WTC11 (cell line): ENCODE measurements at regions of chr17 and their contacts with region 1.

Region 1: DNA sequence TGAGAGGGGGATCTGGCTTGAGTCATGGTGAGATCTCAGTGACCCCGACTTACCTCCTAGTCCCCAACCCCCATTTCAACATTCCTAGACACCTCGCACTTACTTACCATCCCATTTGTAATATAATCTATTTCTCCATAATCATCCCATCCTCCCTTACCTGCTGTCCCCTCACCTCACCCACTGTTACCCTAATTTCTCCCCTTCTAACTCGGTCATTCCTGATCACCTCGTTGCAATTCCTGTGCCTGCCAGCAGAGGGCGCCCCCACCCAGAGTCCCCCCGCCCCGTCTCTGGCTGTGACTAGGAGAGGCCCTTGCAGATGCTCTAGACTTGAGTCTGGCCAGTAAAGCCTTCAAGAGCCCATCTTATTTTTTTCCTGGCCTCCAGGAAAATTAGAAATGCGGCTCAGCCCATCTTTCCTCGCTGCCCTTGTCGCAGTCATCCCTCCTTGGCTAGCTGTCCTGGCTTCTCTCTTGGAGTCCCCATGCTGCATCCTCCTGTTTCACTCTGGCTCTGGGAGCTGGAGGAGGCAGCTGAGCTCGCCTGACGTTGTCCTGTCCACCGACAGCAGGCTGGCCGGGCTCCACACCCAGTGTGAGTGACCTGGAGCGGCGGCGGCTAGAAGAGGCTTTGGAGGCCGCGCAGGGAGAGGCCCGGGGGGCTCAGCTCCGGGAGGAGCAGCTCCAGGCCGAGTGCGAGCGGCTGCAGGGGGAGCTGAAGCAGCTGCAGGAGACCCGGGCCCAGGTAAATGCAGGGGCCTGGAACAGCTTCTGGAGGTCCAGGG is 5.0 kb downstream of the TBKBP1 start:
- DNase-seq: peak; percentile 88
- ATAC-seq: peak; percentile 23
- H3K4me3 Mint-ChIP-seq: no peak overlapping the region
- H3K27ac Mint-ChIP-seq: no peak overlapping the region
- H3K4me1 Mint-ChIP-seq: peaks cover 16% of the 10 kb centered on the region
- H3K27me3 Mint-ChIP-seq: no peaks in the 10 kb centered on the region
- CTCF ChIP-seq: peak; percentile 100

Region 2: DNA sequence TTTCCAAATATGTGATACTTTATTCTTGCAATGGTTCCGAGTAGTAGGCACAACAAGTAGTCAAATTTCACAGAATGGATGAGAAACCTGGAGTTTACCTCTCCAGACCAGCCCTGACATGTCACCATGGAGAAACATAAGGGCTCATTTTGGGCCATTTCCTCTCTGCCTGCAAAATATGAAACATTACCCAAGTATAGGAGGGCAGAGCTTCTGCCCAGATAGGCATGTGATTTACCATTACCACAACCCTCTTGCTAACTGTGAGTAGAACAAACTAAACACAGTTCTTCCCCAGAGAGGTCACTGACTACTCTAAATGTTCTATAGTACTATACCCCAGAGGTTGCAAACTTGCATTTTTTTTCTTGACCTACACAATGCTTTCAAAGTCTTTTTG is 64.9 kb before region 1 on chr17:
- CTCF ChIA-PET with region 1: no interaction called
- POLR2A ChIA-PET with region 1: no interaction called
- DNase-seq: no peak
- ATAC-seq: no peak
- H3K4me3 Mint-ChIP-seq: no peak overlapping the region
- H3K27ac Mint-ChIP-seq: no peak overlapping the region
- H3K4me1 Mint-ChIP-seq: no peaks in the 10 kb centered on the region
- H3K27me3 Mint-ChIP-seq: no peaks in the 10 kb centered on the region
- CTCF ChIP-seq: no peak

Region 3: GRCh38 chr17:47649153-47649971 is 49.6 kb before region 1 on chr17 and contains the start of gene KPNB1:
- CTCF ChIA-PET with region 1: interaction called, 10 read pairs
- POLR2A ChIA-PET with region 1: interaction called, 15 read pairs
- DNase-seq: peak; percentile 99
- ATAC-seq: peak; percentile 91
- H3K4me3 Mint-ChIP-seq: peak within 1 kb of the TSS; percentile 91
- H3K27ac Mint-ChIP-seq: peak within 1 kb of the TSS; percentile 100
- H3K4me1 Mint-ChIP-seq: peaks cover 28% of the 10 kb centered on the region
- H3K27me3 Mint-ChIP-seq: no peaks in the 10 kb centered on the region; the same call in 1 of the 2 replicates
- CTCF ChIP-seq: no peak
- total RNA-seq, gene KPNB1: 437 to 506 TPM (median 452 TPM) in 3 replicates

Region 4: DNA sequence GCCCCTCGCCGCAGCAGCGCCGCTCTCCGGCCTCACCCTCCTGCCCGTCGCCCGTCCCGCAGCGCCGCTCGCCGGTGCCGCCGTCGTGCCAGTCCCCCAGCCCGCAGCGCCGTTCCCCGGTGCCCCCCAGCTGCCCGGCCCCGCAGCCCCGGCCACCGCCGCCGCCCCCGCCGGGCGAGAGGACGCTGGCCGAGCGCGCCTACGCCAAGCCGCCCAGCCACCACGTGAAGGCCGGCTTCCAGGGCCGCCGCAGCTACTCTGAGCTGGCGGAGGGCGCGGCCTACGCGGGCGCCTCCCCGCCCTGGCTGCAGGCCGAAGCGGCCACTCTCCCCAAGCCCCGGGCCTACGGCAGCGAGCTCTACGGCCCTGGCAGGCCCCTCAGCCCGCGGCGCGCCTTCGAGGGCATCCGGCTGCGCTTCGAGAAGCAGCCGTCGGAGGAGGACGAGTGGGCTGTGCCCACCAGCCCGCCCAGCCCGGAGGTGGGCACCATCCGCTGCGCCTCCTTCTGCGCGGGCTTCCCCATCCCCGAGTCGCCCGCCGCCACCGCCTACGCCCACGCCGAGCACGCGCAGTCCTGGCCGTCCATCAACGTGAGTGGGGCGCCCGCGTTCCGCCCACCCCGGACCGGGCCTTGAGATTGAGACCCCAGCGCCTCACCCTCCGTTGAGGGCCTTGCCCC is 10.1 kb after region 1 on chr17:
- CTCF ChIA-PET with region 1: interaction called, 37 read pairs
- POLR2A ChIA-PET with region 1: no interaction called
- DNase-seq: peak; percentile 49
- ATAC-seq: peak; percentile 81
- H3K4me3 Mint-ChIP-seq: peak overlapping the region; percentile 43
- H3K27ac Mint-ChIP-seq: no peak overlapping the region
- H3K4me1 Mint-ChIP-seq: peaks cover 9% of the 10 kb centered on the region
- H3K27me3 Mint-ChIP-seq: peaks cover 34% of the 10 kb centered on the region
- CTCF ChIP-seq: no peak

Region 5: DNA sequence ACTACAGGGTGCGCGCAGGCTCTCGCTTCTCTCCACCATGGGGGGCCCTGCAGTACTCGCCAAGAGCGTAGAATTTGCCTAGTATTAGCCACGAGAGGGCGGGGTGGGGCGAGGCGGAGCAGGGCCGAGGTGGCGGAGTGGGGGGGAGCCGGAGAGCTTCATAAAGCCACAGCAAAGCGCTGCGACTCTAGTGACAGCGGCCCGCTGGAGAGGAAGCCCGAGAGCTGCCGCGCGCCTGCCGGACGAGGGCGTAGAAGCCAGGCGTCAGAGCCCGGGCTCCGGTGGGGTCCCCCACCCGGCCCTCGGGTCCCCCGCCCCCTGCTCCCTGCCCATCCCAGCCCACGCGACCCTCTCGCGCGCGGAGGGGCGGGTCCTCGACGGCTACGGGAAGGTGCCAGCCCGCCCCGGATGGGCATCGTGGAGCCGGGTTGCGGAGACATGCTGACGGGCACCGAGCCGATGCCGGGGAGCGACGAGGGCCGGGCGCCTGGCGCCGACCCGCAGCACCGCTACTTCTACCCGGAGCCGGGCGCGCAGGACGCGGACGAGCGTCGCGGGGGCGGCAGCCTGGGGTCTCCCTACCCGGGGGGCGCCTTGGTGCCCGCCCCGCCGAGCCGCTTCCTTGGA is 34.2 kb after region 1 on chr17 and contains the start of gene TBX21:
- CTCF ChIA-PET with region 1: interaction called, 33 read pairs
- POLR2A ChIA-PET with region 1: no interaction called
- DNase-seq: peak; percentile 79
- ATAC-seq: peak; percentile 79
- H3K4me3 Mint-ChIP-seq: peak within 1 kb of the TSS; percentile 81
- H3K27ac Mint-ChIP-seq: no peak within 1 kb of the TSS
- H3K4me1 Mint-ChIP-seq: peaks cover 9% of the 10 kb centered on the region
- H3K27me3 Mint-ChIP-seq: peaks cover 77% of the 10 kb centered on the region
- CTCF ChIP-seq: no peak
- total RNA-seq, gene TBX21: 0.15 to 0.18 TPM in 2 of 3 replicates, not detected in the other

Region 6: GRCh38 chr17:47776330-47777197 is 77.6 kb after region 1 on chr17:
- CTCF ChIA-PET with region 1: no interaction called
- POLR2A ChIA-PET with region 1: no interaction called
- DNase-seq: no peak
- ATAC-seq: peak; percentile 77
- H3K4me3 Mint-ChIP-seq: no peak overlapping the region
- H3K27ac Mint-ChIP-seq: no peak overlapping the region
- H3K4me1 Mint-ChIP-seq: no peaks in the 10 kb centered on the region
- H3K27me3 Mint-ChIP-seq: peaks cover 38% of the 10 kb centered on the region
- CTCF ChIP-seq: peak; percentile 80; the same call in 1 of the 2 replicates

Region 7: DNA sequence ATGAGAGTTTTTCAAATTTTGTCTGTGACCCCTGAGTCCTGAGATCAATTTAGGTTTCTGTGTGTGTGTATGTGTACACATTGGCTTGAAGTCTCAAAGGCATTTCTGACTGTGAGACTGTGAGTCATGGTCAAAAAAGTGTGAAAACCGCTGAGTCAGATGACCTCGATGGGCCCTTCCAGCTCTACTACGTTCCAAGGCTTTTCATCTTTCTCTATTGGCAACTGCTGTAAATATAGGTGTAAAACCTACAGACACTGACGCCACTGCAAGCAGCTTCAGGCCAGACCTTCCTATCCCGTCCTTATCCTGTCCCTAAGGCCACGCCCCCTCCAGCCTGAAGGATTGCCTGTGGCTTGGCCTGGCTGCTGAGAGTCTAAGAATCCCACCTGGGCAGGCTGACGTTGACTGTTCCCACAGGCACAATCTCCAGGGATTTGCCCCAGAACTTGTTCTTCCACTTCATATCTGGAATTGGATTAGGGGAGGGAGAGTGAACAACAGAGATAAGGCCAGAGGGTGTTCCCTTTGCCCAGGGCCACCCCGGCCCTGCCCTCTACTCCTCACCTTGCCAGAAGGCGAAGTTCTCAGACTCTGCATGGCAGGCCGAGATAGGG is 111.4 kb after region 1 on chr17:
- CTCF ChIA-PET with region 1: no interaction called
- POLR2A ChIA-PET with region 1: no interaction called
- DNase-seq: peak; percentile 55
- ATAC-seq: peak; percentile 83
- H3K4me3 Mint-ChIP-seq: no peak overlapping the region
- H3K27ac Mint-ChIP-seq: no peak overlapping the region; the same call in 1 of the 2 replicates
- H3K4me1 Mint-ChIP-seq: peaks cover 6% of the 10 kb centered on the region
- H3K27me3 Mint-ChIP-seq: no peaks in the 10 kb centered on the region
- CTCF ChIP-seq: no peak

Region 8: DNA sequence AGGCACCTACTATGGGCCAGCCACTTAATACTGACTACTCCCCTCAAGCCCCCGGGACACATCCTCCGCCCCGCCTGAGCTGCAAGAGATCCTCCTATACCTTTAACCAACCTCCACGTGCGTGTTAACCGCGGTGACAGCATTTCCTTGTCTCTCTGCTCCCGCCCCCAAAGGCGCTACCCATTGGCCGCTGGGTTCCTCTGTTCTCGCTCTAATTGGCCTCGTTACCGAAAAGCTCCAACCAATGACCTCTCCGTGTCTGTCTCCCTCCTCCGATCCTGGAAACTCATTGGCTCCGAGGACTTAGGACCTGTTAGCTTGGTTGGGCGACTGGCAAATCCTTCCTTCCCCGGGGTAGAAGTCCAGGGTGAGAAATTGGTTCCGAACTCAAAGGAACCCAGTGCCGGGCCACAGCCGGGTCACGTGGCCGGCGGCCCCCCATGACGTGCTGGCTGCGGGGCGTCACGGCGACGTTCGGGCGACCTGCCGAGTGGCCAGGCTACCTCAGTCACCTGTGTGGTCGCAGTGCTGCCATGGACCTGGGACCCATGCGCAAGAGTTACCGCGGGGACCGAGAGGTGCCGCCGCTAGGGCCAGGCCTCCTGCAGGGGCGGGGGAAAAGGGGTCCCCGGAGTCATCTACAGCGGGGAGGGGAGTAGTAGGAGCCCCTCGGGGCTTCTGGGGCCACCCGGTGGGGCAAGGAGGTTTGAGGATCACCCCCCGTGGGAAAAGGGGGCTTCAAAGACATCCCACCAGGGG is 242.5 kb after region 1 on chr17 and contains the start of gene PNPO:
- CTCF ChIA-PET with region 1: no interaction called
- POLR2A ChIA-PET with region 1: no interaction called
- DNase-seq: peak; percentile 90
- ATAC-seq: peak; percentile 99
- H3K4me3 Mint-ChIP-seq: peak within 1 kb of the TSS; percentile 80
- H3K27ac Mint-ChIP-seq: no peak within 1 kb of the TSS
- H3K4me1 Mint-ChIP-seq: peaks cover 14% of the 10 kb centered on the region
- H3K27me3 Mint-ChIP-seq: peaks cover 30% of the 10 kb centered on the region
- CTCF ChIP-seq: no peak
- total RNA-seq, gene PNPO: 12.2 to 17.8 TPM (median 17.2 TPM) in 3 replicates

Region 9: DNA sequence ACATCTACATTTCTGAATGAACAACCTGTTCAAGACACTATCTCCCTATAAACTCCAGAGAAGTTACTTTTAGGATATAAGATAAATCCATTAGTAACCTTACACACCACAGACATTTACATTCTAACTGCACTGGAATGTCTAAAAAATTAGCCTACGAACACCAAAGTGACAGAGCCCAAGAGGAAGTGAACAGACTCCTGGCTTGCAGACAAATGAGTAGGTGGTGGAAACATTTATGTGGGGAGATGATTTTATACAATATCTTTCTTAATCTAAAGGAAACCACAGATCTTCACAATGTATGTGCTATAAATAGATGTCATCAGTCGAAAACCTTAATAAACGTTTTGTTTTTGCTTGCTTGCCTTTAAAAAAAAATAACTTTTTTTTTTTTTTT is 1644.3 kb after region 1 on chr17:
- CTCF ChIA-PET with region 1: no interaction called
- POLR2A ChIA-PET with region 1: interaction called, 11 read pairs
- DNase-seq: no peak
- ATAC-seq: no peak
- H3K4me3 Mint-ChIP-seq: no peak overlapping the region
- H3K27ac Mint-ChIP-seq: no peak overlapping the region
- H3K4me1 Mint-ChIP-seq: peaks cover 17% of the 10 kb centered on the region
- H3K27me3 Mint-ChIP-seq: no peaks in the 10 kb centered on the region
- CTCF ChIP-seq: no peak